ENCODE measurements at regions of chr6 and their contacts with region 1.

Region 1: DNA sequence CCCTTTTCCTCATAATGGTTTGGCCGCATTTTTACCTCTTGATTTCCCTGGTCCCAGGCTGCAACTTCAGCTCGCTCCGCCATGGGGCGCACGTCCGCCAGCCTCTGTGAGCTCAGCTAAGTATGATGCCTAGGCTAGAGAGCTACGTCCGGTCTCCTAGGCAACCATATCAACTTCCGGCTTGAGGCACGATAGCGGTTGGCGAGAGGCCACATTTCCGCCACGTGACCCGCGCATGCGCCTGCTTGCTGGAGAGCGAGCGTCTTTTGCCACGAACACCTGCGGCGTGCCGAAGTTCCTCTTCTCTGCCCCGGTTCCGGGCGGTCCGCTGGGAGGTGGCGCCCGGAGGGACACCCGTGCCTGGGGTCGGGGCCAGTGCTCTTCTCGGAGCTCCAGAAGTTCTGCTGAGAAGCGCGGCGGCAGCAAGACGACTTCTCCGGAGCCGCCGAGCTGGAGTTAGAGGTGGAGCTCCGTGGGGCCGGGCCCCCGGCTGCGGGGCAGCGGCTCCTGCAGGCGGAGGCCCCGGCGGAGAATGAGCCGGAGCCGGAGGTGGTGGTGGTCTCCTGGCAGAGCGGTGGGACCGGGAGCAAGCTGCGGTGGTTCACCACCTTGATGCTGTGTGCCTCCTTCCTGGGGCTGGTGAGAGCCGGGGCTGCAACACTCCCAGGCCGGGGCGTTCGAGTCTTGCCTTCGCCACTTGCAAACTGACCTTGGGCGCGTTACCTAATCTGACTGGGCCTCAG is 172.0 kb downstream of the SLC16A10 start:
- DNase-seq: peak; percentile 98 to 99
- ATAC-seq: peak; percentile 98 to 99 (median 98)
- H3K4me3 ChIP-seq: peak overlapping the region; percentile 75
- H3K27ac ChIP-seq: peak overlapping the region; percentile 87
- H3K4me1 ChIP-seq: peaks cover 7% of the 10 kb centered on the region
- H3K27me3 ChIP-seq: no peaks in the 10 kb centered on the region
- CTCF ChIP-seq: peak; percentile 95

Region 2: GRCh38 chr6:111306104-111306888 is 47.0 kb after region 1 on chr6:
- intact Hi-C with region 1: loop called in 1 of 2 experiments (anchors 5 kb)
- DNase-seq: no peak
- ATAC-seq: no peak
- H3K4me3 ChIP-seq: no peak overlapping the region
- H3K27ac ChIP-seq: no peak overlapping the region
- H3K4me1 ChIP-seq: peaks cover 8% of the 10 kb centered on the region
- H3K27me3 ChIP-seq: no peaks in the 10 kb centered on the region
- CTCF ChIP-seq: no peak

Region 3: GRCh38 chr6:111657146-111657545 is 397.9 kb after region 1 on chr6:
- intact Hi-C with region 1: loop called in 1 of 2 experiments (anchors 10 kb)
- DNase-seq: no peak
- ATAC-seq: peak; percentile 39 to 69 (median 45)
- H3K4me3 ChIP-seq: no peak overlapping the region
- H3K27ac ChIP-seq: peak overlapping the region; percentile 56
- H3K4me1 ChIP-seq: peaks cover 42% of the 10 kb centered on the region
- H3K27me3 ChIP-seq: no peaks in the 10 kb centered on the region
- CTCF ChIP-seq: no peak

Region 4: DNA sequence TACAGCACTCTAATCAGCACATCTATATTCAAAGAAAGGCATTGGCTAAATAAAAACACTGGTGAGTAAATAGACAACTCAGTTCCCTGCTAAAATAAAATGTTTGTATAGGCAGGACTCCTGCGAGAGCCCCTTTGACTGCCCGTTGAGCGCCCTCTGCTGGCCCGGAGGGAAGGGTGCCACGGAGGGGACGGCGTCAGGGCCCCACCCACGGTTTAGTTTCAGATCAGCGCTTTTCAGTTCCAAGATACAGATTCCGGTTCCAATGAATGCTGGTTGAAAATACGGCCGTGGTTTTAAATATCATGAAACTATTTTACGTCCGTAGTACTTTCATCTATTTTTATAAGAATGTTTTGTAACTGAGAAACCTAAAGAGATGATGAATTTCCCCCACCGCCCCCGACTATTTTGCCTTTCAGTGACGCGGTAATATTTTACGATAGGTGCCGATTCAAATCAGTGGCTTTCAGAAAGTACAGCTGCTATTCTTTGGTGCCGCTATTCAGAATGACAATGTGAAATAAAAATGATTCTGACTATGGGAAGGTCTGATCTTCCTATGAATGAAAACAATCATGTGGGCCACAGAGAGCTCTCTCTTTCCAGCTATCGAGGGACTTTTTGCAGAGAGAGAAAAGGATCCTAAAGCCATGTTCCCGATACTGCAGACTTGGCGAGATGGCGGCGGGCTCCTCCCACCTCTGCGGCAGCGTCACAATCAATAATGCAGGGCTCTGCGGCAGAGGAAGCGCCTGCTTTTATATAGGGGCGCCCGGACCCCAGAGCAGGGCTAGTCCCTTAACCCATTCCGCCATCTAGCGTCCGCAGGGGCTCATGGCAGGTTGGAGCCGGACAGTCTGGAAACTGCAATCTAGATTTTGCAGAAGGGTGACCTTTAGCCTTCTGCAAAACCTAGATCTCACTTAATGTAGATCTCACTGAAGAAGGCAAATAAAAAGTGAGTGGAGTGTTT is 784.1 kb after region 1 on chr6:
- intact Hi-C with region 1: loop called in 1 of 2 experiments (anchors 10 kb)
- DNase-seq: peak; percentile 87 to 91
- ATAC-seq: peak; percentile 89 to 97 (median 94)
- H3K4me3 ChIP-seq: peak overlapping the region; percentile 82
- H3K27ac ChIP-seq: peak overlapping the region; percentile 77
- H3K4me1 ChIP-seq: peaks cover 6% of the 10 kb centered on the region
- H3K27me3 ChIP-seq: no peaks in the 10 kb centered on the region
- CTCF ChIP-seq: peak; percentile 94